PC-9 (cell line): ENCODE measurements at regions of chr2 and their contacts with region 1.

Region 1: GRCh38 chr2:46984642-46985476 is 69.3 kb upstream of the MCFD2 start:
- DNase-seq: peak; percentile 78 to 96
- H3K4me3 ChIP-seq: no peak overlapping the region
- H3K27ac ChIP-seq: peak overlapping the region; percentile 86
- H3K4me1 ChIP-seq: peaks cover 68% of the 10 kb centered on the region
- H3K27me3 ChIP-seq: no peaks in the 10 kb centered on the region
- CTCF ChIP-seq: no peak

Region 2: GRCh38 chr2:46763861-46764260 is 221.0 kb before region 1 on chr2:
- CTCF ChIA-PET with region 1: no interaction called
- POLR2A ChIA-PET with region 1: no interaction called
- intact Hi-C with region 1: no loop called
- DNase-seq: no peak
- H3K4me3 ChIP-seq: no peak overlapping the region
- H3K27ac ChIP-seq: no peak overlapping the region
- H3K4me1 ChIP-seq: no peaks in the 10 kb centered on the region
- H3K27me3 ChIP-seq: no peaks in the 10 kb centered on the region
- CTCF ChIP-seq: no peak

Region 3: GRCh38 chr2:46836295-46837111 is 148.4 kb before region 1 on chr2:
- CTCF ChIA-PET with region 1: no interaction called
- POLR2A ChIA-PET with region 1: no interaction called
- intact Hi-C with region 1: no loop called
- DNase-seq: no peak
- H3K4me3 ChIP-seq: no peak overlapping the region
- H3K27ac ChIP-seq: no peak overlapping the region
- H3K4me1 ChIP-seq: no peaks in the 10 kb centered on the region
- H3K27me3 ChIP-seq: no peaks in the 10 kb centered on the region
- CTCF ChIP-seq: no peak

Region 4: GRCh38 chr2:46915811-46916630 is 68.8 kb before region 1 on chr2:
- CTCF ChIA-PET with region 1: no interaction called
- POLR2A ChIA-PET with region 1: interaction called, 5 read pairs
- intact Hi-C with region 1: loop called (anchors 1 kb)
- DNase-seq: peak; percentile 93
- H3K4me3 ChIP-seq: peak overlapping the region; percentile 76
- H3K27ac ChIP-seq: peak overlapping the region; percentile 75
- H3K4me1 ChIP-seq: peaks cover 60% of the 10 kb centered on the region
- H3K27me3 ChIP-seq: no peaks in the 10 kb centered on the region
- CTCF ChIP-seq: no peak

Region 5: GRCh38 chr2:47065771-47066380 is 81.0 kb after region 1 on chr2:
- CTCF ChIA-PET with region 1: interaction called, 12 read pairs
- POLR2A ChIA-PET with region 1: interaction called, 3 read pairs
- intact Hi-C with region 1: no loop called
- DNase-seq: peak; percentile 65 to 78
- H3K4me3 ChIP-seq: no peak overlapping the region
- H3K27ac ChIP-seq: peak overlapping the region; percentile 44
- H3K4me1 ChIP-seq: peaks cover 66% of the 10 kb centered on the region
- H3K27me3 ChIP-seq: no peaks in the 10 kb centered on the region
- CTCF ChIP-seq: no peak

Region 6: DNA sequence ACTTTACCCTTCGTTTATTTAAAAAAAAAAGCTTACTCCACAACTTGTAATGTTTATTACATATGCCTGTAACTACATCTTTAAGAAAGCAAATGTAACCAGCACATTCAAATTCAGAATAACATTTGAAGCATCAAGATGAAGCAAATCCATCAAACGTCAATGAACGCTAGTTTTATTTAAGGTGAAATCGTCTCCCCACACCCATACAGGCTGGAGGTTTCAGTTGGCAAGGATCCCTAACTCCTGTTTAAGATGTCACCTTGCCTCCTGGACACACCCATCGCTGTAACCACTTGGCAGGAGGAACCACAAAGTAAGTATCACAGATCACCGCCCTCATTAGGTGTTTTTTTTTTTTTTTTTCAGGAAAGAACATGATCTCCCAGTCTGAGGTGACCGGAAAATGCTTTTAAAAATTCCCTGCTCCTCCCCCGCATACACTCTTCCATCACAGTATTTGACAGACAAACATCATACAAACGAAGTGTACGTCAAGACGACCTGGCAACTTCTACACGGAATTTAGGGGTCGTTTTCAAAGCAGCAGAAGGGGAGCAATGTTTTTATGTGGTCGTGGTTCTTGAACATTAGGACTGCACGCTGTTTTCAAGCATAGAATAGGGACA is 190.0 kb after region 1 on chr2:
- CTCF ChIA-PET with region 1: interaction called, 10 read pairs
- POLR2A ChIA-PET with region 1: no interaction called
- intact Hi-C with region 1: no loop called
- DNase-seq: peak; percentile 74 to 98
- H3K4me3 ChIP-seq: peak overlapping the region; percentile 94
- H3K27ac ChIP-seq: peak overlapping the region; percentile 95
- H3K4me1 ChIP-seq: peaks cover 63% of the 10 kb centered on the region
- H3K27me3 ChIP-seq: no peaks in the 10 kb centered on the region
- CTCF ChIP-seq: no peak

Region 7: GRCh38 chr2:47198985-47199451 is 214.2 kb after region 1 on chr2:
- CTCF ChIA-PET with region 1: interaction called, 14 read pairs
- POLR2A ChIA-PET with region 1: interaction called, 8 read pairs
- intact Hi-C with region 1: no loop called
- DNase-seq: peak; percentile 85 to 99
- H3K4me3 ChIP-seq: no peak overlapping the region
- H3K27ac ChIP-seq: peak overlapping the region; percentile 69
- H3K4me1 ChIP-seq: peaks cover 81% of the 10 kb centered on the region
- H3K27me3 ChIP-seq: no peaks in the 10 kb centered on the region
- CTCF ChIP-seq: no peak